ENCODE measurements at regions of chr20 and their contacts with region 1.

Region 1: DNA sequence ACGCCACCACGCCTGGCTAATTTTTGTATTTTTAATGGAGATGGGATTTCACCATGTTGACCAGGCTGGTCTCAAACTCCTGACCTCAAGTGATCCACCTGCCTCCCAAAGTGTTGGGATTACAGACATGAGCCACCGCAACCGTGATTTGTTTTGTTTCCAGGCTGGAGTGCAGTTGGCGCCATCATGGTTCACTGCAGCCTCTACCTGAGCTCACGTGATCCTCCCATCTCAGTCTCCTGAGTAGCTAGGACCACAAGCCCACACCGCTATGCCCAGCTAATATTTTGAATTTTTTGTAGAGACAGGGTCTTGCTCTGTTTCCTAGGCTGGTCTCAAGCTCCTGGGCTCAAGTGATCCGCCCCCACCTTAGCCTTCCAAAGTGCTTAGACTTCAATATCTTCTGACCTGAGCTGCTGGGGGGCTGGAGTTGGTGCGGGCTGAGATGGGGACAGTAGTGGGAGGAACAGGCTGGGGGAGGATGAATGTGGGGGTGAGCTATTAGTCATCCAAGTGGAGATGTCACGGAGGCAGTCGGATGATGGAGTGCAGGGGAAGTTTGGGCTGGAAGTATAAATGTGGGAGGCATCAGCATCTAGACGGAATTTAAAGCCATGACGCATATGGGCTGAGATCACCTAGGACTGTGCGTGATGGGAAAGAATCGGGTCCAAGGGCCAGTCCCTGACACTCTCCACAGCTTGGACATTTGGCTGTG is 23.1 kb upstream of the ZMYND8 start:
- DNase-seq: no peak
- ATAC-seq: no peak

Region 2: DNA sequence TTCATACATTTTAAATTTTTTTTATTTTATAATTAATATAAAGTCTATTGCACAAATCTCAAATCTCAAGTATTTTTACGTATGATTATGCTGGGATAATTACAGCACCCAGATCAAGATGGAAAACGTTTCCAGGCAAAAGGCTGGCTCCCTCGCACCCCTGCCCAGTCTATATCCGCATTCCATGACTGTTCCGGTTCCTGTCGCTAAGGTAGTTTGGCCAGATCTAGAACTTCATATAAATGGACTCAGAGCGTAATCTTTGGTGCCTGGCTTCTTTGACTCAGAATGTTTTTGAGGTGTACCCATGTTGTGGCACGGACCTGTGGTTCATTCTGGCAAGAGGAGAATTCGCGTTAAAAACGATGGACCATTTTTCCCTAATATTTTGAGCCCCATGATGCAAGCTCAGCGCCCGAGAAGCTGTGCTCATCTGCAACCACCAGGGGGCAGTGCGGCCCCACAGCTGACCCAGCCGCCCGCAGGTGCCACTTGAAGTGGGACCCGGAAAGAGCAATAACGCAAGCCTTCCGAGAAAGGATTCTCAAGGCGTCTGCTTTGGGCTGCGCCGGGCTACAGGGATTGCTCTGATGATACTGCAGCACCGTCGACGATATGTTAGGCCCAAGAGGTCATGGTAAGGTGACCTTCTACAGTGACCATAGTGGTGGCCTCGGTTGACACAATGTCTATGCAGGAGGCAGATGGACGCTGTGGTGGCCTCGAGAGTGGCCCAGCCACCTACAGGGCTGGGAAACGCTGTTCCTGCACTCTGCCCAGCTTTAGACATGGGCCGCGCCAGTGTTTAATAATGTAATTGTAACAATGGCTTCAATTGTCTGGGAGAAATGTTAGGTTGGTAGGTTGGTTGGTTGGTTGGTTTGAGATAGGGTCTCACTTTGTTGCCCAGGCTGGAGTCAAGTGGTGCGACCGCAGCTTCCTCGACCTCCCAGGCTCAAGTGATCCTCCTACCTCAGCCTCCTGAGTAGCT is 183.2 kb before region 1 on chr20:
- intact Hi-C with region 1: loop called in 1 of 2 experiments (anchors 5 kb)
- DNase-seq: peak; percentile 56 to 77
- ATAC-seq: peak; percentile 76

Region 3: DNA sequence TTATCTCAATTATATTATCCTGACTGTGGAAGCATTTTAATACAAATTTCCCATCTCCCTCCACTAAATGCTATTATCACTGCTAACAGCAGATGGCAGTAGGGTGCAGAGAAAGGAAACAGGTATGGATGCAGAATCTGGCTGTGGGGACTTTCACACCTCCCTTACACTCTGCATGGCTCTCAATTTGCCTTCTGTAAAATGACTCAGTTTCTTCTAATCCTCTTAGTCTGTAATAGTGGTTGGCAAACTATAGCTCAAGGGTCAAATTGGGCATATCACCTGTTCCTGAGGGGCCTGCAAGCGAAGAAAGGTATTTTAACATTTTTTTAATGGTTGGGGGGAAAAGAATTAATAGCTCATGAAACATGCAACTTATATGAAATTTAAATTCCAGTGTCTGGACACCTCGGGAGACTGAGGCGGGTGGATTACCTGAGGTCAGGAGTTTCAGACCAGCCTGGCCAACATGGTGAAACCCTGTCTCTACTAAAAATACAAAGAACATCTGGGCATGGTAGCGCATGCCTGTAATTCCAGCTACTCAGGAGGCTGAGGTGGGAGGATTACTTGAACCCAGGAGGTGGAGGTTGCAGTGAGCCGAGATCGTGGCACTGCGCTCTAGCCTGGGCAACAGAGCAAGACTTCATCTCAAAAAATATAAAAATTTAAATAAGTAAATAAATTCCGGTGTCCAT is 106.5 kb before region 1 on chr20:
- intact Hi-C with region 1: loop called (anchors 2 to 5 kb)
- DNase-seq: peak in 1 of 2 donors; percentile 18
- ATAC-seq: peak; percentile 76